Naive thymus-derived CD4-positive, alpha-beta T cell (primary cell): ENCODE measurements at regions of chrX and their contacts with region 1.

Region 1: GRCh38 chrX:18425199-18426003 is at the start of gene CDKL5:
- DNase-seq: peak; percentile 83 to 98 (median 96)
- ATAC-seq: peak; percentile 97
- H3K4me3 ChIP-seq: peak within 1 kb of the TSS; percentile 77
- H3K4me3 Mint-ChIP-seq: peak within 1 kb of the TSS; percentile 85 to 95 (median 89)
- H3K27ac ChIP-seq: peak within 1 kb of the TSS; percentile 93
- H3K27ac Mint-ChIP-seq: peak within 1 kb of the TSS; percentile 71 to 92 (median 91)
- H3K4me1 ChIP-seq: peaks cover 0 to 5% of the 10 kb centered on the region in 2 donors
- H3K4me1 Mint-ChIP-seq: peaks cover 5 to 25% (median 13%) of the 10 kb centered on the region in 7 donors
- H3K27me3 ChIP-seq: no peaks in the 10 kb centered on the region
- H3K27me3 Mint-ChIP-seq: peaks cover 0 to 25% (median 0%) of the 10 kb centered on the region in 5 donors
- total RNA-seq, gene CDKL5: 1.2 to 7.0 (median 5.8) TPM

Region 2: GRCh38 chrX:16786139-16786790 is 1639.1 kb before region 1 on chrX and contains the start of gene TXLNG:
- CTCF ChIA-PET with region 1: no interaction called
- POLR2A ChIA-PET with region 1: no interaction called
- intact Hi-C with region 1: loop called in 1 of 2 experiments (anchors 5 kb)
- DNase-seq: peak; percentile 81 to 98 (median 97)
- ATAC-seq: peak; percentile 97
- H3K4me3 ChIP-seq: peak within 1 kb of the TSS; percentile 94
- H3K4me3 Mint-ChIP-seq: peak within 1 kb of the TSS; percentile 95 to 99 (median 97)
- H3K27ac ChIP-seq: peak within 1 kb of the TSS; percentile 88
- H3K27ac Mint-ChIP-seq: peak within 1 kb of the TSS; percentile 78 to 94 (median 90)
- H3K4me1 ChIP-seq: peaks cover 0 to 3% of the 10 kb centered on the region in 2 donors
- H3K4me1 Mint-ChIP-seq: peaks cover 4 to 42% (median 12%) of the 10 kb centered on the region in 7 donors
- H3K27me3 ChIP-seq: no peaks in the 10 kb centered on the region
- H3K27me3 Mint-ChIP-seq: no peaks in the 10 kb centered on the region
- total RNA-seq, gene TXLNG: 11.9 to 23.1 (median 17.3) TPM

Region 3: DNA sequence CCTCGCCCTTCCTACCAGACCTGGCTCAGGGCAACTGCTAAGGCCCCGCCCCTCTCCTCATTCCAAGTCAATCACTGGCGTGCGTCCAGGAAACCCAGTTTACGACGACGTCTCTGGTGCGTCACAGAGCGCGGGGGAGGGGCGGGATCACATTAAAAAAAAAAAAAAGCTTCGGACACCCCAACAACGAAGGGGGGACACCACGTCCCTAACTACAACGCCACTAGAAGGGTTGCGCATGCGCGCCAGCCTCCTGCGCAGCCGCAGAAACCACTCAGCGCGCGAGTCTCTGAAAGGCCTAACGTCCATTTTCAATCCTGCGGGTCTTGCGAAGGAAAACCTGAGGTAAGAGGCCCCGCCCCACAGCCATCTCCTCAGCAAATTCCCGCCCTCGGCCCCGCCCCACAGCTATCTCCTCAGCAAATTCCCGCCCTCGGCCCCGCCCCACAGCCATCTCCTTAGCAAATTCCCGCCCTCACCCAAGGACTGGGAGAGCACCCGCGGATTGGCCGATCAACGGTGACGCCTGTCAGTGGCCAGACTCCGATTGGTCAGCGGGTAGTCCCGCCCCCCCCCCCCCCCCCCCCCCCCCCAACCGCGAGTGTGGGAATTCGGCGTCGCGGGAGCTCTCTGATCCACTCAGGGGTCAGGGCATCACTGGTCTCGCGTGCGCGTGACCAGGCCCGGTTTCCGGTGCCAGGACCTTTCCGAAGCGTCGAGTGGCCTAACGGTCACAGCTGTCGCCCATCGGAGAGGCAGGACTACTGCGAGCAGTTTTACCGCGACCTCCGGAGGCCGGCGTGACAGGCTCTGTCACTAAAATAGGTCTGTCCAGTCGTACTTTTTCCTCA is 688.3 kb before region 1 on chrX and contains the start of gene SCML1:
- CTCF ChIA-PET with region 1: no interaction called
- POLR2A ChIA-PET with region 1: interaction called, 3 read pairs
- intact Hi-C with region 1: loop called (anchors 1 kb)
- DNase-seq: peak; percentile 70 to 91 (median 85)
- ATAC-seq: peak; percentile 88
- H3K4me3 ChIP-seq: peak within 1 kb of the TSS; percentile 73
- H3K4me3 Mint-ChIP-seq: peak within 1 kb of the TSS; percentile 84 to 98 (median 94)
- H3K27ac ChIP-seq: peak within 1 kb of the TSS; percentile 88
- H3K27ac Mint-ChIP-seq: peak within 1 kb of the TSS; percentile 75 to 98 (median 98)
- H3K4me1 ChIP-seq: peaks cover 0 to 5% of the 10 kb centered on the region in 2 donors
- H3K4me1 Mint-ChIP-seq: peaks cover 13 to 37% (median 29%) of the 10 kb centered on the region in 7 donors
- H3K27me3 ChIP-seq: no peaks in the 10 kb centered on the region
- H3K27me3 Mint-ChIP-seq: peaks cover 0 to 42% (median 0%) of the 10 kb centered on the region in 5 donors
- total RNA-seq, gene SCML1: 0.82 to 50.1 (median 28.5) TPM

Region 4: DNA sequence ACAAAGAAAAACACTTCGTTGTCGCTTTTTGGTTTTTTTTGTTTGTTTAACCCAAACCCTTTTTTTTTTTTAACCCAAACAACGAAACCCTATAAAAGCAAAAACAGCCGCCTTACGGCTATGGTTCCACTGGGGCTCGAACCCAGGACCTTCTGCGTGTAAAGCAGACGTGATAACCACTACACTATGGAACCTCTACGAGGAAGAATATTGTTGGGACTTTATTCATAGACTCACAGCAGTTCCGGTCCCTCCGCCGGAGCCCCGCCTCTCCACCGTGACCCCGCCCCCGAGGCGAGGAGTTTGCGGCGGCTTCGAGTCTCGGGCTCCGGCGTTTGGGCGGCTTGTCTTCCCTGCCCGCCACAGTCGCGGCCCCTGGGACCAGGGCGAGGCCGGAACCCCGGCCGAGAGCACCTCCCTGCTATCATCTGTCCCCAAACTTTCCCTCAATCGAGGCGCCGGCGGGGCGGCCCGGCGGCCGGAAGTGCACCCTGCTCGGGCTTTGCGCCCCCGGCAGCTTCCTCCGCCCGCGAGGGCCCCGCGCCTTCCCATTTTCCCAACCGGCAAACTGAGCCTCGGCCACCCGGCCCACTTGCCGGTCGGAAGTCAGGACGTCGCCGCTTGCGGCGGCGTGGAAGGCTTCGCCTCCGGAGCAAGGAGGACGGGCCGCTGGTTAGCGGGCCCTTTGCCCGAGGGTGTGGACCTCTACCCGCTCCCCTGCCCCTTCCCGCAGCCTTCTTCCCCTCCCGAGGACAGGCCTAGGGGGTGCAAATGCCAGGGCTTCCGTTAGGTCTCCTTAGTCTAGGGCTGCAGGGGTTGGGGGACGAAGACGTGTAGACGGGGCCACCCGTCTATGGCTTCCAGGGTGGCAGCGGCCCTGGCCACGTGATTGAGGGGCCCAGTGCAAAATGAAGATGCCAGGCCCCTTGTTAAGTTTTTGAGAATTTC is 249.7 kb after region 1 on chrX:
- CTCF ChIA-PET with region 1: no interaction called
- POLR2A ChIA-PET with region 1: no interaction called
- intact Hi-C with region 1: loop called (anchors 1 kb)
- DNase-seq: peak; percentile 76 to 89 (median 87)
- ATAC-seq: peak; percentile 96
- H3K4me3 ChIP-seq: peak overlapping the region; percentile 63
- H3K4me3 Mint-ChIP-seq: peak overlapping the region; percentile 74 to 87 (median 80)
- H3K27ac ChIP-seq: peak overlapping the region; percentile 82
- H3K27ac Mint-ChIP-seq: peak overlapping the region; percentile 71 to 95 (median 85)
- H3K4me1 ChIP-seq: no peaks in the 10 kb centered on the region
- H3K4me1 Mint-ChIP-seq: peaks cover 0 to 15% (median 8%) of the 10 kb centered on the region in 7 donors
- H3K27me3 ChIP-seq: no peaks in the 10 kb centered on the region
- H3K27me3 Mint-ChIP-seq: no peaks in the 10 kb centered on the region

Region 5: GRCh38 chrX:18946157-18946556 is 520.8 kb after region 1 on chrX:
- CTCF ChIA-PET with region 1: no interaction called
- POLR2A ChIA-PET with region 1: no interaction called
- intact Hi-C with region 1: no loop called
- DNase-seq: no peak
- ATAC-seq: no peak
- H3K4me3 ChIP-seq: no peak overlapping the region
- H3K4me3 Mint-ChIP-seq: no peak overlapping the region
- H3K27ac ChIP-seq: no peak overlapping the region
- H3K27ac Mint-ChIP-seq: no peak overlapping the region
- H3K4me1 ChIP-seq: no peaks in the 10 kb centered on the region
- H3K4me1 Mint-ChIP-seq: peaks cover 0 to 1% (median 0%) of the 10 kb centered on the region in 7 donors
- H3K27me3 ChIP-seq: no peaks in the 10 kb centered on the region
- H3K27me3 Mint-ChIP-seq: no peaks in the 10 kb centered on the region

Region 6: DNA sequence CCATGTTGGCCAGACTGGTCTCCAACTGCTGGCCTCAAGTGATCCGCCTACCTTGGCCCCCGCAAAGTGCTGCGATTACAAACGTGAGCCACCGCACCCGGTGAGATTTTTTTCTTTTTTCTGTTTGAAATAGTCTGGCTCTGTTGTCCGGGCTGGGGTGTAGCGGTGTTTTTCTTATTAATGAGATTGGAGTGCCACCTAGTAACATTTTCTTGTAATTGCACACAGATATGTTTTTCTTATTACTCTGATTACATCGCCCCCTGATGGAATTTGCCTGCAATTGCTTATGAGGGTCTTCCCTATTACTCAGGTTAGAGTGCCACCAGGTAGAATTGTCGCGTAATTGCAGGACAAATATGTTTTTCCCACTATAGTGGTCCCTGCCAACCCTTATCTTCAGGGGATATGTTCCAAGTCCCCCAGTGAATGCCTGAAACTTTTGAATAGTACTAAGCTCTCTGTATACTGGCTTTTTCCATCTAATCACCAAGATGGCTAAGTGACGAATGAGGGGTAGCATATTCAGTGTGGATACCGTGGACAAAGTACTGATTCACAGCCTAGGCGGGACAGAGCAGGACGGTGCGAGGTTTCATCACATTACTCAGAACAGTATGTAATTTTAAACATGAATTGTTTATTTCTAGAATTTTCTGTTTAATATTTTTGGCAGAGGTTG is 909.7 kb after region 1 on chrX:
- CTCF ChIA-PET with region 1: interaction called, 3 read pairs
- POLR2A ChIA-PET with region 1: no interaction called
- intact Hi-C with region 1: loop called (anchors 1 to 2 kb)
- DNase-seq: peak in 4 of 9 donors; percentile 24 to 32 (median 28)
- ATAC-seq: no peak
- H3K4me3 ChIP-seq: no peak overlapping the region
- H3K4me3 Mint-ChIP-seq: peak overlapping the region in 1 of 10 donors; percentile 32
- H3K27ac ChIP-seq: no peak overlapping the region
- H3K27ac Mint-ChIP-seq: peak overlapping the region in 1 of 9 donors; percentile 77
- H3K4me1 ChIP-seq: no peaks in the 10 kb centered on the region
- H3K4me1 Mint-ChIP-seq: peaks cover 0 to 5% (median 2%) of the 10 kb centered on the region in 7 donors
- H3K27me3 ChIP-seq: no peaks in the 10 kb centered on the region
- H3K27me3 Mint-ChIP-seq: peaks cover 0 to 4% (median 0%) of the 10 kb centered on the region in 5 donors

Region 7: GRCh38 chrX:19571711-19572110 is 1146.3 kb after region 1 on chrX:
- CTCF ChIA-PET with region 1: no interaction called
- POLR2A ChIA-PET with region 1: no interaction called
- intact Hi-C with region 1: no loop called
- DNase-seq: no peak
- ATAC-seq: no peak
- H3K4me3 ChIP-seq: no peak overlapping the region
- H3K4me3 Mint-ChIP-seq: no peak overlapping the region
- H3K27ac ChIP-seq: no peak overlapping the region
- H3K27ac Mint-ChIP-seq: no peak overlapping the region
- H3K4me1 ChIP-seq: no peaks in the 10 kb centered on the region
- H3K4me1 Mint-ChIP-seq: peaks cover 0 to 20% (median 5%) of the 10 kb centered on the region in 7 donors
- H3K27me3 ChIP-seq: no peaks in the 10 kb centered on the region
- H3K27me3 Mint-ChIP-seq: no peaks in the 10 kb centered on the region

Region 8: GRCh38 chrX:19990556-19991349 is 1565.4 kb after region 1 on chrX and contains the start of gene BCLAF3:
- CTCF ChIA-PET with region 1: no interaction called
- POLR2A ChIA-PET with region 1: no interaction called
- intact Hi-C with region 1: loop called in 1 of 2 experiments (anchors 2 kb)
- DNase-seq: peak; percentile 64 to 91 (median 71)
- ATAC-seq: peak; percentile 94
- H3K4me3 ChIP-seq: peak within 1 kb of the TSS; percentile 51
- H3K4me3 Mint-ChIP-seq: peak within 1 kb of the TSS; percentile 82 to 96 (median 90)
- H3K27ac ChIP-seq: peak within 1 kb of the TSS; percentile 71
- H3K27ac Mint-ChIP-seq: peak within 1 kb of the TSS; percentile 79 to 98 (median 92)
- H3K4me1 ChIP-seq: no peaks in the 10 kb centered on the region
- H3K4me1 Mint-ChIP-seq: peaks cover 7 to 30% (median 19%) of the 10 kb centered on the region in 7 donors
- H3K27me3 ChIP-seq: no peaks in the 10 kb centered on the region
- H3K27me3 Mint-ChIP-seq: no peaks in the 10 kb centered on the region
- total RNA-seq, gene BCLAF3: 6.2 to 14.1 (median 11.7) TPM